RWPE1 (cell line): ENCODE measurements at regions of chr7 and their contacts with region 1.

Region 1: GRCh38 chr7:74690474-74690873 is 33.0 kb downstream of the GTF2I start:
- DNase-seq: no peak
- H3K27ac ChIP-seq: 0 out of 2 replicates have a peak overlapping the region, but pooled peaks have one; percentile 24
- CTCF ChIP-seq: no peak

Region 2: GRCh38 chr7:74579800-74580685 is 110.4 kb before region 1 on chr7:
- CTCF ChIA-PET with region 1: no interaction called
- POLR2A ChIA-PET with region 1: no interaction called
- DNase-seq: no peak
- H3K27ac ChIP-seq: peak overlapping the region; percentile 69
- CTCF ChIP-seq: no peak

Region 3: DNA sequence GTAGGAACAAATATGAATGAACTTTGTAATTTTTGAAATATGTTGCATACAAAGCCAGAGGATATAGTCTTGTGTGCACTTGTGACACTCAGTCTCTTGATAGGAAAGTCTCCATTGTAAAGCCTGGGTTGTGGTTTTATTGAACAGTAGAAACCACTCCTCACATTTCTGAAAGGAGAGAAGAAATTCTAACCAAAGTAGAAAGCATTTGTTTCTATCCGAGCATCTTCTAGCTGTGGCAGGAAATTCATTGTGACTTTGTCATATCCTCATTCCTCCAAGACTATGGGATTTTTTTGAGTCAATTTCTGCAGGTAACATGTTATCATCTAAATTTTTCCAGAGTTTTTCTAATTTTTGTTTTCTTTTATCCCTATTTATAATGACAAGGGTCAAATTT is 27.9 kb after region 1 on chr7:
- CTCF ChIA-PET with region 1: no interaction called
- POLR2A ChIA-PET with region 1: interaction called, 10 read pairs
- DNase-seq: no peak
- H3K27ac ChIP-seq: no peak overlapping the region
- CTCF ChIP-seq: no peak